ENCODE measurements at regions of chr12 and their contacts with region 1.

Region 1: DNA sequence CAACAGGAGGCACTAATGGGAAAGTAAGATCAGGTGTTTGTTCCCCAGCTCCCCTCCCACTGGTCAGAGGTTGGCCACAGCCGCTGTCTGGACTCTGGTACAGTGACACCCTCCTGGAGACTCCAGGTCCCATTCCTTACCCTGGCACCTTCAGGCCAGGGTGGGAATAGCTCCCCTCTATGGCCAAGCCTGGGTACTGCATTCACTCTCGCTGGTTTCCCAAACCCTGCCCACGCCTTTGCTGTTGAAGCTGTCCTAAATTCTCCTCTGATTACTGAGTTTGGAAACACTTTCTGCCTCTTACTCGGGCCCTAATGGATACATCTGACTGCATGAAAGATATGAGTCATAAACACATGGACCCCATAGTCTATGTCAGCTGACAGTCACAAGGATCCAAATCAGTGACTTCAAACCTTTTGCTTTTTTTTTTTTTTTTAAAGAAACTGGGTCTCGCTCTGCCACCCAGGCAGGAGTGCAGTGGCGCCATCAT is 17.9 kb downstream of the HRK start:
- DNase-seq: no peak
- CTCF ChIP-seq: peak; percentile 37

Region 2: DNA sequence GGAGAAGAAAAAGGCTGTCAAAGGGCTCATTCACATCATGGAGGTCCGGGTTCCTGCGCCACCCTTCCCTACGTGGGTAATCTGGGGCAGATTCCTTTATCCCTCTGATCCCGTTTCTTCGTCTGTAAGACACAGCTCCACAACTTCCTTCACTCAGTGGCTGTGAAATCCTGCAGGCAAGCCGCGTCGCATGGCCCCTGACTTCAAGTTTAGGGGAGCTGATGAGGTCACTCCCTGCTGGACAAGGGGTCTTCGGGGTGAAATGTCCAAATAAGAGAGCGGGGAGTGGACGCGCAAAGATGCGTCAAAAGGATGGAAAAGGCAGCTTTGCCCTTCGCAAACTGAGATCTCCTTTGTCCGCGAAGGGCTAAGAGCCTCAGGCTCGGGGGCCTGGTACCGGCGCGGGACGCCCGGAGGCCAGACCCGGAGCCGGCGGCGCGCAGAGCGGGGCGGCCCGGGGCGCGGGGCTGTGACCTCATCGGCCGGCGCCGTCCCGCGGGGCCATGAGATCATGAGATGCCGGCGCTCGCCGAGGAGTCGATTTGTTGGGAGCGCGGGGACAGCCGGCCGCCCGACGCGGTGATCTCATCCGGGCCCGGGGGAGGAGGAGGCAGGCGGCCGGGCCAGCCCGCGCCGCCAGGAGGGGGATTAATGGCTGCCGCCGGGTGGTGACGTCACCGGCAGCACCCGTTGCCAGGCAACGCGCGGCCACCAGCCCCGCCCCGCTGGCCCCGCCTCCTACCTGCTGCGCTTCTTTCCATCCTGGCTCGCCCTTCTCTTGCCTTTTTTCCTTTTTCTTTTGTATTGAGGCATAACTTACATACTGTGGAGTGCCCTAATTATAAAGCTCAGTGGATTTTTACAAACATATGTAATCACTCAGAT is 44.1 kb before region 1 on chr12:
- CTCF ChIA-PET with region 1: interaction called, 10 read pairs
- POLR2A ChIA-PET with region 1: no interaction called
- DNase-seq: peak; percentile 98
- CTCF ChIP-seq: no peak

Measured in GM10248 (cell line).